OCI-LY7 (cell line): ENCODE measurements at regions of chr19 and their contacts with region 1.

Region 1: DNA sequence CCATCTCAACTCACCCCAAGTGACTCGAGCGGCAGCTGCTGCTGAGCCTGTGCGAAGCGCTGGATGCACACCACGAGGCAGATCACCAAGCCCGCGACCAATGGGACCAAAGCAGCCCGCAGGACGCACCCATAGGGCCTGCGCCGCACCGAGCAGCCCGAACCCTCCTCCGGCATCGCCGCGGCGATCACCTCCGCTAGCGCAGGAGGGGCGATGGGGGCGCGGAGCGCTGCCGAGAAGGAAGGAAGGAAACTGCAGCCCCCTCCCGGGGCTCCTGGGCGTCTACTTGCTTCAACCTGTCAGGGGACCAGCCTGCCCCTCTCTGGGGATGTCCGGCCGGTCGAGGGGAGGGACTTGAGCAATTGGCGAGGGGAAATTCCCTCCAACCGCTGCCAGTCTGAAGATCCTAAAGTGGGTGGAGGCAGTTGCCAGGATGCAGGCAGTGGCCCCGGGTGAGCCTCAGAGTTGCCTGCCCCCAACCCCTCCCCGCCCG is at the start of gene CD70:
- DNase-seq: peak; percentile 95
- H3K4me3 ChIP-seq: peak within 1 kb of the TSS; percentile 76
- H3K27ac ChIP-seq: peak within 1 kb of the TSS; percentile 82
- H3K4me1 ChIP-seq: peaks cover 71% of the 10 kb centered on the region
- CTCF ChIP-seq: no peak
- total RNA-seq, gene CD70: 111 and 165 TPM in 2 replicates

Region 2: DNA sequence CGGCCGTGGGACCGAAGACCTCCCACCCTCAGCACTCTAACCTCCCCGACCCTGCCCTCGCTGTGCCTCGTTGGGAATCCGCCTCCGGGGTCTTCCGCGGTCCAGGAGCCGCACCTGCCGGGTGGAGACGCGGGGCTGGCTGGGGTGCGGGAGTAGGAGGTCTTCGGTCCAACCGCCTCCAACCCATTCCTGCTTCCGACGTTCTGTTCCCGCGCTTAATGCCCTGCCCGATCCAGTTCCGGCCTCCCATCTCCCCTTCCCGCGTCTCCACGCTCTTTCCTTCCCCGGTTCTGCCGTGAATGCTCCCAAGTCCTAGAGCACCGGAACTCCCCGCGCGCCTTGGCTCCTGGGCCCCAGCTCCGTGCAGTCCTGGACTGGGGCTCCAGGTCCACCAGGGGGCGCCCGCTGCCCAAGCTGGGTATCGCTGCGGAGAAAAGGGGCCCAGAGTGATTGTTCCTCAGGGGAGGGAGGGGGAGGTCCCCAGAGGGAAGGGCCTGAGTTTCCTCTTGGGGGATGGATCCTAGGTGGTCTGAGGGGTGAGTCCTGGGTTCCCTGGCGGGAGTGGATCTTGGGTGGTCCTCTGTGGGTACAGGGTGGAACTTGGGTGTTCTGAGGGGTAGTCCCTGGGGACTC is 74.1 kb before region 1 on chr19:
- CTCF ChIA-PET with region 1: no interaction called
- POLR2A ChIA-PET with region 1: interaction called, 11 read pairs
- intact Hi-C with region 1: loop called (anchors 1 kb)
- DNase-seq: peak; percentile 98
- H3K4me3 ChIP-seq: peak overlapping the region; percentile 70
- H3K27ac ChIP-seq: peak overlapping the region; percentile 90
- H3K4me1 ChIP-seq: peaks cover 53% of the 10 kb centered on the region
- CTCF ChIP-seq: peak; percentile 100

Region 3: DNA sequence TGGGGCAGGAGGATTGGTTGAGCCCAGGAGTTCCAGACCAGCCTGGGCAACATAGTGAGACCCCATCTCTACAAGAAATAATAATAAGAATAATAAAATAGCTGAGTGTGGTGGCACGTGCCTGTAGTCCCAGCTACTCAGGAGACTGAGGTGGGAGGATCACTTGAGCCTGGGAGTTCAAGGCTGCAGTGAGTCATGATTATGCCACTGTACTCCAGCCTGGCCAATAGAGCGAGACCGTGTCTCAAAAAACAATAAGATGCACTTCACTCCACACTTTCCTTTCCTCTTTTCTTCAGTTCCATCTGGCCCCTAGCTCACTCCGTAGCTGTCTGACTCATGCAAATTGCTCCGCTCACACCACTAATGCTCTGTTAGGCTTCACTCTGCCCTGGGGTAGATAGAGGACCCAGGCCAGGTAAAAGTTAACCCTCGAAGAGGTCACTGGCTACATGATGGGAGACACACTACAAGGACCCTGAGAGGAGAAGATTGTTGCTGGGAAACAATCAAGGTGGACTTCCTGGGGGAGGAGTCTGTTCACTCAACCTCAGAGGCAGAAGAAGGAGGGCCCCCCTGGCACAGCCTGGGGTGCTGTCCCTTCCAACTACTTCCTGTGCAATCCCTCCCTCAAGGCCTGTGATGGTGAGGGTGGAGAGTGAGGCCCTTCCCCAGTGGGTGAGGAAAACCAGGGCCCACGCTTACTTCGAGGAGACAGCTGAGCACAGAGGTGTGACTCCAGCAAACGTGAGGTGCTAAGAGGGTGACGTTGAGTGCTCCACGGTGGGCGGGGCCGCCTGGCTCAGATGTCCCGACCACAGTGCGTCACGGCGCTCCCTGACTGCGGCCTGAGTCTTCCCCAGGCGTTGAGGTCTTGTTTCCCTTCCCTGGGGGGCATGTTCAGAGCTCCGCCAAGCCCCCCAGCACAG is 68.9 kb before region 1 on chr19:
- CTCF ChIA-PET with region 1: no interaction called
- POLR2A ChIA-PET with region 1: interaction called, 11 read pairs
- intact Hi-C with region 1: no loop called
- DNase-seq: peak; percentile 91
- H3K4me3 ChIP-seq: peak overlapping the region; percentile 60
- H3K27ac ChIP-seq: peak overlapping the region; percentile 90
- H3K4me1 ChIP-seq: peaks cover 81% of the 10 kb centered on the region
- CTCF ChIP-seq: no peak

Region 4: GRCh38 chr19:6530386-6531161 is 60.3 kb before region 1 on chr19 and contains the start of gene TNFSF9:
- CTCF ChIA-PET with region 1: no interaction called
- POLR2A ChIA-PET with region 1: interaction called, 5 read pairs
- intact Hi-C with region 1: loop called (anchors 1 kb)
- DNase-seq: peak; percentile 95
- H3K4me3 ChIP-seq: peak within 1 kb of the TSS; percentile 91
- H3K27ac ChIP-seq: peak within 1 kb of the TSS; percentile 91
- H3K4me1 ChIP-seq: peaks cover 57% of the 10 kb centered on the region
- CTCF ChIP-seq: no peak
- total RNA-seq, gene TNFSF9: 18.1 and 22.3 TPM in 2 replicates

Region 5: DNA sequence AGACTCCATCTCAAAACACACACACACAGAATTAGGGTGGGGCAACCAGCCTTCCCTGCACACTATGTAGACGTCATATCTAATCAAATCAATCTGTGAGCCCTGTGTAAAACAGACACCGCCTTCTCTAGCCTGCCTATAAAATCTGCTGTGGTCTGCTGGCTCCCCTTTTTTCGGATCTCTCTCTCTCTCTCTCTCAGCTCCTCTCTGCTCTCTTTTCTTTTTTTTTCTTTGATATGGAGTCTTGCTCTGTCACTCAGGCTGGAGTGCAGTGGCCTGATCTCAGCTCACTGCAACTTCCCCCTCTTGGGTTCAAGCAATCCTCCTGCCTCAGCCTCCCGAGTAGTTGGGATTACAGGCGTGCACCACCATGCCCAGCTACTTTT is 11.8 kb after region 1 on chr19:
- CTCF ChIA-PET with region 1: no interaction called
- POLR2A ChIA-PET with region 1: interaction called, 11 read pairs
- intact Hi-C with region 1: loop called (anchors 2 kb)
- DNase-seq: peak; percentile 87
- H3K4me3 ChIP-seq: peak overlapping the region; percentile 74
- H3K27ac ChIP-seq: peak overlapping the region; percentile 92
- H3K4me1 ChIP-seq: peaks cover 78% of the 10 kb centered on the region
- CTCF ChIP-seq: no peak

Region 6: DNA sequence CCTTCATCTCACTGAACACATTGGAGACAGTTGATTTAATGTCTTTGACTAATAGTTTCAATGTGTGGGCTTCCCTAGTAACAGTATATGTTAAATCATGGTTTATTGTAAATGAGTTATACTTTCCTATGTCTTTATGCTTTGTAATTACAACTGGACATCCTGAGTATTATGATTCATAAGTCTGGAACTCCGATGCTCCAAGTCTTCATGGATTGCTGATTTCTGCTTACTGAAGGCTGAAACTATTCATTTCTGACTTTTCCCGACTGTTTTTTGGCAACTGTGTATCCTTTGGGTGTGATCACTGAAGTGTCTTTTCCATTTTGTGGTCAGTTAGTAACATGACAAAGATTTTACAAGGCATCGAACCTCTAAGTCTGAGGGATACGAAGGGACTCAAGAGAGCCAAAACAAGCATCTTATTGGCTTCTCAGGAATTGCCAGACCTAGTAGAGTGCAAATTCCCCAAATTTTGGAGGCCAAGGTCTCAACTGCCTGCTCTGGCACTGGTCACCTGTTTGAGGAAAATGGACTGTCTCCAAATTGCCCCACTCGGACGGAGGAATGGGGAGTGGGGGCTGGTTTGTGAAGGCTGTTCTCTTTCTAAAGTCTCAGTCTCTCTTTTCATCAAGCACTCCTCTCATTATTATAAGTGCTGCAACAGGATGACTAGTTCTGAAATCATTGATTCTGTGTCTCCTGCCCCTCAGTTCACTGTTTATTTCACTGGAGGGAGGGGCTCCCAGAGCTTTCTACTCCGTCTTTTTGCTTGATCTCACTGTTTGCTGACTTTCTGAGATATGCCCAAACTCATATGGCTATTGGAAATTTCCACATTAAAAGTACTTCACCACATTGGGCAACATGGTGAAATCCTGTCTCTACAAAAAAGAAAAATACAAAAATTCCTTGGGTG is 20.3 kb after region 1 on chr19:
- CTCF ChIA-PET with region 1: no interaction called
- POLR2A ChIA-PET with region 1: interaction called, 3 read pairs
- intact Hi-C with region 1: loop called (anchors 2 kb)
- DNase-seq: no peak
- H3K4me3 ChIP-seq: no peak overlapping the region
- H3K27ac ChIP-seq: no peak overlapping the region
- H3K4me1 ChIP-seq: peaks cover 43% of the 10 kb centered on the region
- CTCF ChIP-seq: no peak

Region 7: GRCh38 chr19:6632002-6632621 is 41.2 kb after region 1 on chr19:
- CTCF ChIA-PET with region 1: no interaction called
- POLR2A ChIA-PET with region 1: no interaction called
- intact Hi-C with region 1: loop called (anchors 2 kb)
- DNase-seq: peak; percentile 92
- H3K4me3 ChIP-seq: no peak overlapping the region
- H3K27ac ChIP-seq: peak overlapping the region; percentile 7
- H3K4me1 ChIP-seq: peaks cover 33% of the 10 kb centered on the region
- CTCF ChIP-seq: peak; percentile 99